Mucosa of descending colon (tissue), 3 donors: ENCODE measurements at regions of chr2 and their contacts with region 1.

Region 1: DNA sequence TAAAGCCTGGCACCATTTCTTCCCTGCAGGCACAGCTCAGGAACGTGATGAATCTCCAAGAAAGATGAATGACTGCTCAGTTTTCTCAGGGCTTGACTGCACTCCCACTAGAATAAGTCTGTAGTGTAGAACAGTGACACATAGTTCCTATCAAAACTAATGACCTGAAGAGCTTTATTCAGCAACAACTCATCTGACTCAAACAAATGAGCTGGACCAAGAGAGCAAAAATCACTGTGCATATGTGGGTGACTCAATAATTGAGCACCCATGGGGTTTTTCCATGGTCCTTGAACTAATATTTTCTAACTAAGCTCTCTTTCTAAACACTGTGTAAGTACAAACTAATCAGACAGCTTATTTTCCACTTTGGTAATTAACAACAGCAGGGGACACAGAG is 61.1 kb upstream of the XDH start:
- DNase-seq: no peak
- ATAC-seq: no peak
- H3K4me3 ChIP-seq: no peak overlapping the region
- H3K4me1 ChIP-seq: no peaks in the 10 kb centered on the region
- CTCF ChIP-seq: no peak

Region 2: GRCh38 chr2:29657674-29658073 is 1818.0 kb before region 1 on chr2:
- intact Hi-C with region 1: loop called in 1 of 2 experiments (anchors 10 kb)
- DNase-seq: no peak
- ATAC-seq: no peak
- H3K4me3 ChIP-seq: no peak overlapping the region
- H3K4me1 ChIP-seq: no peaks in the 10 kb centered on the region
- CTCF ChIP-seq: no peak

Region 3: GRCh38 chr2:31598694-31599093 is 123.0 kb after region 1 on chr2:
- intact Hi-C with region 1: no loop called
- DNase-seq: no peak
- ATAC-seq: no peak
- H3K4me3 ChIP-seq: no peak overlapping the region
- H3K4me1 ChIP-seq: no peaks in the 10 kb centered on the region
- CTCF ChIP-seq: no peak

Region 4: GRCh38 chr2:31637161-31637560 is 161.5 kb after region 1 on chr2:
- intact Hi-C with region 1: no loop called
- DNase-seq: no peak
- ATAC-seq: no peak
- H3K4me3 ChIP-seq: no peak overlapping the region
- H3K4me1 ChIP-seq: no peaks in the 10 kb centered on the region
- CTCF ChIP-seq: no peak